ENCODE measurements at regions of chr11 and their contacts with region 1.

Region 1: GRCh38 chr11:14789879-14790484 is 102.0 kb downstream of the CYP2R1 start:
- DNase-seq: peak in 3 of 14 experiments; percentile 43 to 47 (median 47)
- ATAC-seq: peak; percentile 57
- H3K4me3 ChIP-seq: no peak overlapping the region
- H3K4me3 Mint-ChIP-seq: no peak overlapping the region
- H3K27ac ChIP-seq: no peak overlapping the region
- H3K27ac Mint-ChIP-seq: peak overlapping the region; percentile 27
- H3K4me1 ChIP-seq: no peaks in the 10 kb centered on the region
- H3K4me1 Mint-ChIP-seq: peaks cover 25% of the 10 kb centered on the region
- H3K27me3 ChIP-seq: no peaks in the 10 kb centered on the region
- H3K27me3 Mint-ChIP-seq: no peaks in the 10 kb centered on the region
- CTCF ChIP-seq: peak; percentile 54

Region 2: GRCh38 chr11:13276832-13277767 is 1512.9 kb before region 1 on chr11:
- CTCF ChIA-PET with region 1: no interaction called
- POLR2A ChIA-PET with region 1: no interaction called
- intact Hi-C with region 1: no loop called
- DNase-seq: peak; percentile 95 to 98 (median 97)
- ATAC-seq: peak; percentile 84
- H3K4me3 ChIP-seq: peak overlapping the region; percentile 98
- H3K4me3 Mint-ChIP-seq: peak overlapping the region; percentile 97
- H3K27ac ChIP-seq: peak overlapping the region; percentile 29 to 66
- H3K27ac Mint-ChIP-seq: peak overlapping the region; percentile 85
- H3K4me1 ChIP-seq: peaks cover 34% of the 10 kb centered on the region
- H3K4me1 Mint-ChIP-seq: peaks cover 49% of the 10 kb centered on the region
- H3K27me3 ChIP-seq: no peaks in the 10 kb centered on the region
- H3K27me3 Mint-ChIP-seq: no peaks in the 10 kb centered on the region
- CTCF ChIP-seq: no peak

Region 3: GRCh38 chr11:15006139-15006759 is 216.3 kb after region 1 on chr11:
- CTCF ChIA-PET with region 1: interaction called, 9 read pairs
- POLR2A ChIA-PET with region 1: no interaction called
- intact Hi-C with region 1: loop called in 1 of 2 experiments (anchors 10 kb)
- DNase-seq: peak in 3 of 14 experiments; percentile 55 to 57 (median 57)
- ATAC-seq: peak; percentile 54
- H3K4me3 ChIP-seq: no peak overlapping the region
- H3K4me3 Mint-ChIP-seq: no peak overlapping the region
- H3K27ac ChIP-seq: no peak overlapping the region
- H3K27ac Mint-ChIP-seq: no peak overlapping the region
- H3K4me1 ChIP-seq: no peaks in the 10 kb centered on the region
- H3K4me1 Mint-ChIP-seq: no peaks in the 10 kb centered on the region
- H3K27me3 ChIP-seq: peaks cover 0 to 19% of the 10 kb centered on the region in 2 experiments
- H3K27me3 Mint-ChIP-seq: peaks cover 64% of the 10 kb centered on the region
- CTCF ChIP-seq: peak; percentile 63

Region 4: GRCh38 chr11:15074206-15075161 is 284.5 kb after region 1 on chr11:
- CTCF ChIA-PET with region 1: interaction called, 6 read pairs
- POLR2A ChIA-PET with region 1: no interaction called
- intact Hi-C with region 1: loop called (anchors 1 to 5 kb)
- DNase-seq: peak; percentile 71 to 88 (median 78)
- ATAC-seq: peak; percentile 93
- H3K4me3 ChIP-seq: peak overlapping the region; percentile 50
- H3K4me3 Mint-ChIP-seq: peak overlapping the region; percentile 88
- H3K27ac ChIP-seq: no peak overlapping the region
- H3K27ac Mint-ChIP-seq: no peak overlapping the region
- H3K4me1 ChIP-seq: peaks cover 25% of the 10 kb centered on the region
- H3K4me1 Mint-ChIP-seq: peaks cover 18% of the 10 kb centered on the region
- H3K27me3 ChIP-seq: peaks cover 22 to 23% of the 10 kb centered on the region in 2 experiments
- H3K27me3 Mint-ChIP-seq: peaks cover 39% of the 10 kb centered on the region
- CTCF ChIP-seq: peak; percentile 93

Region 5: DNA sequence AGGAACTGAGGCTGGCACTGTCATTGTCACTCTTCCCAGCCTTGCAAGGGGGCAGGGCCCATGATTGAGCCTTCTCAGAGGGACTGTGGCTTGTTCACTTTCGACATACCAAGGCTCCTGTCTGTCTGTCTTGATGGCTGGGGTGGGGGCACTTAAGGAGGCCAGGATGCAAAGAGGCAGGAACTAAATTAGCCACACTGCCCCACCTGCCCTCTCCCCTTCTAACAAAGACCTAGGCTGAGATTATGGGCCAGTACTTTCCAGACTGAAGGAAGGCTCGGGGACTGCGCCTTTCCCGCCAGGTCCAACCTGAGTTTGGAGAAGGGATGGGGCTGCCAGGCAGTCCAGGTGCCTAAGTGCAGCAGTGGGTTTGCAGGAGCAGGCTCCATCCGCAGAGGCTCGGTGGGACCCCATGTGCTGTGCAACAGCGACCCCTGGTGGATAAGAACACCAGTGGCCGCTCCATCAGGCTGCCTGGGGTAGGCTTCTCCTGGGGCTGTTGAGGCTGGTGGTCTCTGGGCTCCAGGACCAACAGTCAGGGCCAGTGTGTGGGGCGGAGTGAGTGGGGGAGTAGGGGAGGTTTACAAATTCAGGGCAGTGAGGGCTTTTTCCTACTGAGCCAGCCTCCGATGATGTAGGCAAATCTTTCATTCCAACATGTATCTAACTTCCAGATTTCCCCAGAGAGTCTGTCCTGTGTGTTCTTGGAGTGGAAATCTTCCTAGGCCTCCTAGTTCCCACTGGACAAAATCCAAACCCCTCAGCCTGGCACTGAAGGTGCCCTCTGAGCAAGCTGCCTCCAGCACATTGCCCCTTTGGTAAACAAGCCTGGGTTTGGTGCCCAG is 418.6 kb after region 1 on chr11:
- CTCF ChIA-PET with region 1: no interaction called
- POLR2A ChIA-PET with region 1: no interaction called
- intact Hi-C with region 1: loop called (anchors 5 to 10 kb)
- DNase-seq: peak; percentile 52 to 79 (median 66)
- ATAC-seq: peak; percentile 81
- H3K4me3 ChIP-seq: no peak overlapping the region
- H3K4me3 Mint-ChIP-seq: no peak overlapping the region
- H3K27ac ChIP-seq: no peak overlapping the region
- H3K27ac Mint-ChIP-seq: no peak overlapping the region
- H3K4me1 ChIP-seq: peaks cover 3% of the 10 kb centered on the region
- H3K4me1 Mint-ChIP-seq: no peaks in the 10 kb centered on the region
- H3K27me3 ChIP-seq: peaks cover 0 to 5% of the 10 kb centered on the region in 2 experiments
- H3K27me3 Mint-ChIP-seq: peaks cover 5% of the 10 kb centered on the region
- CTCF ChIP-seq: peak; percentile 74